Cardiac septum (tissue), 1 donor: ENCODE measurements at regions of chr3 and their contacts with region 1.

Region 1: GRCh38 chr3:191388823-191389222 is 58.5 kb upstream of the UTS2B start:
- DNase-seq: no peak

Region 2: DNA sequence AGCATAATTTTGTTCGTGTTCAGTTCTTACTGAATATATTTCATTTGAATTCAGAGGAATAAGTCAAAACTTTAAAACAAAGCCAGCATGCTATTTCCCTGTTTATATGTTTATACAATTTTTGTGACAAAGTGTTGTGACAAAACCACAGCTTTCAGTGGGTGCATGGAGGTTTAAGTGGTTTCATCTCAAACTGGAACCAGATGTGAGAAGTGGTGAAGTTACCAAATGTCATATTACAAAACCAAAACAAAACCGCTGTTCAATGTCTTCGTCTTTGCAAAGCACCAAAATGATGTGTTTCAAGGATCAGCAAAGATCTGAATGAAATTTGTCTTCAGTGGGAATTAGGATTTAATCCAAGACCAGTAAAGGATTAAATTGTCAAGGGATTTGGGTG is 249.1 kb before region 1 on chr3:
- intact Hi-C with region 1: loop called (anchors 10 kb)
- DNase-seq: no peak

Region 3: DNA sequence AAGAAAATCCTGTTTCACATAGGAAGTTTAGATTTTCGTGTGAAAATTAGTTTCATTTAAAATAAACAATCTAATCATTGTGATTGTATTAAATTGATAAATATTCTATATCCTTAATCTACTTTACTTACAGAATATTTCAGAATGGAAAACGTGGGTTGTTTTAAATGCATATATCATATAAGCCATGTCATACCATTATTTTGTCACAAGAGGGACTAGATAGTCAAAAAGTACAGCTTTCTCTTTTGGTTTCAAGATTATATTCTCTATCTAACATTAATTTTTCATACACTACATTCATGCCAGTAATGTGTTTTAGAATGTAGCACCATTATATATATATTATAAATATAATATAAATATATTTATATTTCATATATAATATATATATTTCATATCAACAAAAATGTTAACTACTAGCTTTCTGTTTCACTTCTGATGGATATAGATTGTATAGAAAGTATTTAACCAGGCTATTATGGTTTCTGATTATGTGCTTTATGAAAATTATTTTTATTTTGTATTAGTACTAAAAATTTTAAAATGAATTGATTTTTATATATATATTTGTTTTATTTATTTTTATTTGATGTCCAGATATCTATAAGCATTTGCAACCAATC is 144.5 kb before region 1 on chr3:
- intact Hi-C with region 1: loop called (anchors 10 kb)
- DNase-seq: no peak

Region 4: GRCh38 chr3:191476066-191476772 is 87.4 kb after region 1 on chr3:
- intact Hi-C with region 1: no loop called
- DNase-seq: no peak